ENCODE measurements at regions of chr1 and their contacts with region 1.

Region 1: DNA sequence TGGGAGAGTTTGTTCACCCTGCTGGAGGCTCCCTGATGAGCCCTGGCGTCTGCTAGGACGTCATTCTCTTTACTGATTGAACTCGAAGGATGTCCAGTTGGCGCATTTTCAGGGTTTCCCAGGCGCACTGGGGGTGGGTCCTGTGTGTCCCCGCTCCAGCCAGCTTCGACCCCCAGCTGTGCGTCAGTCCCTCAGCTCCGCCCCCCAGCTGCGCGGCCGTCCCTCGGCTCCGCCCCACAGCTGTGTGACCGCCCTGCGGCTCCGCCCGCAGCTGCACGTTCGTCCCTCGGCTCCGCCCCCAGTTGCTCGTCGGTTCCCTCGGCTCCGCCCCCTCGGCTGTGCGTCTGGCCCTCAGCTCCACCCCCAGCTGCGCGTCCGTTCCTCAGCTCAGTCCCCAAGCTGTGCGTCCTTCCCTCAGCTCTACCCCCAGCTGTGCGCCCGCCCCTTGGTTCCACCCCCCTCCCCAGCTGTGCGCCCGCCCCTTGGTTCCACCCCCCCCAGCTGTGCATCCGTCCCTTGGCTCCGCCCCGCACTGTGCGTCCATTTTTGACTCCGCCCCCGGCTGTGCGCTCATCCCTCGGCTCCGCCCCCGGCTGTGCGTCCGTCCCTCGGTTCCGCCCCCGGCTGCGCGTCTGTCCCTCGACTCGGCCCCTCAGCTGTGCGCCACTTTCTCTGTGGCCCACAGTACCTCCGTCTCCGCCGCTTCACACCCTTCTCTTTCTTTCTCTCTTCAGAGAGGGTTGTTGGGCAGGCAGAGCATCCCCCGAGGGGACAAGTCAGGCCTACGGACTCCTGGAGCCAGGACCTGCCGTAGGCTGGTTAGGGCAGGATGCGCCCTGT is 61.3 kb downstream of the FAAP20 start:
- DNase-seq: peak; percentile 99
- H3K4me3 ChIP-seq: peak overlapping the region; percentile 11 to 35 (median 28)
- H3K27ac ChIP-seq: peak overlapping the region; percentile 85 to 93 (median 89)
- H3K4me1 ChIP-seq: peaks cover 13 to 50% (median 44%) of the 10 kb centered on the region in 4 donors
- H3K27me3 ChIP-seq: no peaks in the 10 kb centered on the region
- CTCF ChIP-seq: peak in 2 of 5 experiments; percentile 12 to 27
- EP300 ChIP-seq: no peak
- POLR2A ChIP-seq: peak; percentile 25

Region 2: GRCh38 chr1:2174348-2175054 is 41.2 kb after region 1 on chr1:
- in situ Hi-C with region 1: no loop called
- intact Hi-C with region 1: loop called (anchors 5 kb)
- DNase-seq: peak; percentile 50
- H3K4me3 ChIP-seq: peak overlapping the region in 3 of 4 donors; percentile 17 to 26 (median 21)
- H3K27ac ChIP-seq: peak overlapping the region in 2 of 4 donors; percentile 18 to 28
- H3K4me1 ChIP-seq: no peaks in the 10 kb centered on the region
- H3K27me3 ChIP-seq: no peaks in the 10 kb centered on the region
- CTCF ChIP-seq: peak; percentile 81 to 90 (median 89)
- EP300 ChIP-seq: no peak
- POLR2A ChIP-seq: no peak

Region 3: DNA sequence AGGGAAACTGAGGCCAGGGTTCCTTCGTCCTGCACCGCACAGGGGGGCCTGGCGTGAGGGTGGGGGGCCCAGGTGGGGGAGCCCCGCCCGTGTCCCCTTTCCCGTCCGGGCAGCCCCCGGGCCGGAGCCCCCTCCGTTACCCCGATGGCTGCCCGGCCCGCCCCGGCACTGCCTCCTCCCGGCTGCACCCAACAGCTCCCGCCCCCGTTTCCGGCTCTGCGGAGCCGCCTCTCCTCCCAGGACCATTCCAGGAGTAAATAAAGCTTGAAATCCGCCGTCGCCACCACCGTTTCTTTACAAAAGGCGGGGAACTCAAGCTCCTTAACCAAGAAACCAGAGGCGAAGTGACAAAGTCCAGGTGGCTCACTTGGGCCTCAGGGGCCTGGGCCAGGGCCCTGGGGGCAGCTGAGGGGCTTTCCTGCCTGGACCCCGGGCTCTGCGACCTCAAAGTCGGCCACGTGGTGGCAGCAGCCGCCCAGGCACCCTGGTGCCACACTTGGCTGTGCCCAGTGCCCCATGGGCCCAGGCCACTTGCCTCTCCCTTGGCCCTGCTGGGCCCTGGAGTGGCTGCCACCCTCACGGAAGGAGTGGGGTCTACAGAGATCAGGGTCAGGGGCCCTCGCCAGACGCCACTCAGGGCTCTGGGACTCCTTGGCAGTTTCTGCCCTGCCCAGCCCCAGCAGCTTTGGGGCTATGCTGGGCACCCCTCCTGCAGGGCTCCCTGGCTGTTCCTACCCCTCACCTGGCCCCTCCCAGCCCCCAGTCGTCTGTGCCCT is 61.8 kb after region 1 on chr1:
- in situ Hi-C with region 1: no loop called
- intact Hi-C with region 1: no loop called
- DNase-seq: peak; percentile 93
- H3K4me3 ChIP-seq: peak overlapping the region; percentile 47 to 84 (median 64)
- H3K27ac ChIP-seq: peak overlapping the region; percentile 91 to 97 (median 94)
- H3K4me1 ChIP-seq: peaks cover 41 to 69% (median 52%) of the 10 kb centered on the region in 4 donors
- H3K27me3 ChIP-seq: no peaks in the 10 kb centered on the region
- CTCF ChIP-seq: peak; percentile 86 to 98 (median 93)
- EP300 ChIP-seq: no peak
- POLR2A ChIP-seq: peak; percentile 43

Measured in transverse colon (tissue), 4 donors.